Astrocyte of the cerebellum (primary cell): ENCODE measurements at regions of chr9 and their contacts with region 1.

Region 1: GRCh38 chr9:130738281-130738680 is 44.7 kb downstream of the EXOSC2 start:
- DNase-seq: no peak
- H3K4me3 ChIP-seq: no peak overlapping the region
- CTCF ChIP-seq: no peak

Region 2: GRCh38 chr9:130682490-130683121 is 55.7 kb before region 1 on chr9:
- in situ Hi-C with region 1: no loop called
- DNase-seq: no peak
- H3K4me3 ChIP-seq: peak overlapping the region; percentile 7
- CTCF ChIP-seq: peak; percentile 80

Region 3: DNA sequence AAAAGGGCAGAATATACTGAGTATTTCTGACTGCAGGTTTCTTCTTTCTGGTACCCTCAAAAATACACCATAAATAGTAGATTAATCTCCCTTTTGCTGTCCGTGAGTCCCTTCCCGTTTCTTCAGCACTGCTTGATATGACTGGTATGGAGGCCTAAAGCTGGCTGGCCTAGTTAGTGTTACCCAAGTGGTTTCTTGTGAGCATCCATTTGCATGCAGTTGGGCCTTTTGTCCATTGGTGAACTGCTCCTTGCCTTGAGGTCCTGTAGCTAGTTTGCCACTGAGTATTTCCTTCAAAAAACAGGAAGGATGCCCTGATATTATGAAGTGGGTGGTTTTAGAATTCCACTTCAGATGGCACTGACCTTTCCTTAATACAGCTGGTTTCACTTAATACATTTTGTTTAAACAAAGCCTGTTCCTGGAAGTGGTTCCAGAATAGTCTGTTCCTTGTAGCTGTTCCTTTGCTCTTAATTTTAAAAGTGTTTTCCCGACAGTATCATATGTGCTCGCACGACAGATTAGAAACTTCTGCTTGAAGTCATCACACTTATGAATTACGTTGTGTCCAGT is 56.7 kb after region 1 on chr9:
- in situ Hi-C with region 1: loop called (anchors 5 kb)
- DNase-seq: no peak
- H3K4me3 ChIP-seq: no peak overlapping the region
- CTCF ChIP-seq: no peak